Naive thymus-derived CD4-positive, alpha-beta T cell (primary cell): ENCODE measurements at regions of chr20 and their contacts with region 1.

Region 1: DNA sequence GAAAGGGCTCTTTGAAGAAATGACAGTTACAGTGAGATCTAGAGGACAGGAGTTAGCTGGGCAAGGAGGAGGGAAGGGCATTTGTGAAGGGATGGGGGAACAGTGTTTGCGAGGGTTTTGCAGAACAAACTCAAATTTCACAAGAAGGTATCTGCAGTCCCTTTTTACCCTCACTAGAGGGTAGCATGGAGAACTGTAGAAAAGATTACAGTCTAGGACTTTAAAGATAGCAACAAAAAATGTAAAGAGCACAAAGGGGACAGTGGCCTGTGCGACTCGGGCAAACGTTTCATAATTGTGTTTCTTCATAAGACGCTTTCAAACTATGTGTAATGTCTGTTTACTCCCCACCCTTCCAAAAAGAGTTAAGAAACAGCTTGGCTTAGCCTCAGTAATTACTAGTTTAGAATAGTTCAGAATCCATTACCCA is 21.2 kb upstream of the ASXL1 start:
- DNase-seq: peak in 7 of 9 donors; percentile 18 to 57 (median 35)
- ATAC-seq: peak; percentile 79
- H3K4me3 ChIP-seq: no peak overlapping the region
- H3K4me3 Mint-ChIP-seq: no peak overlapping the region
- H3K27ac ChIP-seq: no peak overlapping the region
- H3K27ac Mint-ChIP-seq: peak overlapping the region in 3 of 9 donors; percentile 5 to 75 (median 18)
- H3K4me1 ChIP-seq: peaks cover 5 to 13% of the 10 kb centered on the region in 2 donors
- H3K4me1 Mint-ChIP-seq: peaks cover 5 to 27% (median 8%) of the 10 kb centered on the region in 7 donors
- H3K27me3 ChIP-seq: no peaks in the 10 kb centered on the region
- H3K27me3 Mint-ChIP-seq: no peaks in the 10 kb centered on the region

Region 2: GRCh38 chr20:32168184-32168905 is 168.6 kb before region 1 on chr20:
- CTCF ChIA-PET with region 1: no interaction called
- POLR2A ChIA-PET with region 1: no interaction called
- intact Hi-C with region 1: no loop called
- DNase-seq: no peak
- ATAC-seq: no peak
- H3K4me3 ChIP-seq: no peak overlapping the region
- H3K4me3 Mint-ChIP-seq: no peak overlapping the region
- H3K27ac ChIP-seq: no peak overlapping the region
- H3K27ac Mint-ChIP-seq: peak overlapping the region in 1 of 9 donors; percentile 22
- H3K4me1 ChIP-seq: no peaks in the 10 kb centered on the region
- H3K4me1 Mint-ChIP-seq: peaks cover 0 to 5% (median 0%) of the 10 kb centered on the region in 7 donors
- H3K27me3 ChIP-seq: no peaks in the 10 kb centered on the region
- H3K27me3 Mint-ChIP-seq: no peaks in the 10 kb centered on the region

Region 3: DNA sequence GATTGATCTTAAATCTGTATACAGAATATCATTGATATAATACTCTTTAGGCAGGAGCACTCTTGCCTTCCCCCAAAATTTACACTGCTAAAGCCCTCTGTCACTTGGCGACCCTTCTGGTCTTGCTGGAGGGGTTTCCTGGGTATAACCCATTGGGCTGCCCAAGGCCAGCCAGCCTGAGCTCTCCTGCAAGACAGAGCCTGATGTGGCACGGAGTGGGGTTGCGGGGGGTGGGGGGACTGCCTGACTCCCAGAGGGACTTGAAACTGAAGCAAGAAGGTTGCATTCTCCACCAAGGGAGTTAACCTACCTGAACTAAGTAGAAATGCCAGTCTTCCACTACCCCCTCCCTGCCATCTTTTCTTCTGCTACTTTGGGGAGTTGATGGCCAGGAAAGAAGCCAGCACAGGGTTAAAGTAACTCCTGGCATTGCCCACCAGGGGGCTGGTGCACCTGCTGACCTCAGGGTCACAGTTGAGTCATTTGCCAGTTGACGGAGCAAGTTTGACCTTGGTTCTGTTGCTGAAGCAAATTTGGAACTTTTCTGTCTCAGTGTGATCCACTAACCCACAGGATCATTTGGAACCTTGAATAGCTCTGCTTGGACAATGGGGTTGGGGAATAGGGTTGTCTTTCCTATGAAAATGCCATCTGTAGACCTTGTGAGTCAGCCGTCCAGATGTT is 100.6 kb after region 1 on chr20:
- CTCF ChIA-PET with region 1: no interaction called
- POLR2A ChIA-PET with region 1: no interaction called
- intact Hi-C with region 1: loop called in 1 of 2 experiments (anchors 5 kb)
- DNase-seq: no peak
- ATAC-seq: peak; percentile 36
- H3K4me3 ChIP-seq: no peak overlapping the region
- H3K4me3 Mint-ChIP-seq: no peak overlapping the region
- H3K27ac ChIP-seq: no peak overlapping the region
- H3K27ac Mint-ChIP-seq: peak overlapping the region in 6 of 9 donors; percentile 7 to 48 (median 28)
- H3K4me1 ChIP-seq: no peaks in the 10 kb centered on the region
- H3K4me1 Mint-ChIP-seq: peaks cover 0 to 19% (median 9%) of the 10 kb centered on the region in 7 donors
- H3K27me3 ChIP-seq: no peaks in the 10 kb centered on the region
- H3K27me3 Mint-ChIP-seq: no peaks in the 10 kb centered on the region

Region 4: DNA sequence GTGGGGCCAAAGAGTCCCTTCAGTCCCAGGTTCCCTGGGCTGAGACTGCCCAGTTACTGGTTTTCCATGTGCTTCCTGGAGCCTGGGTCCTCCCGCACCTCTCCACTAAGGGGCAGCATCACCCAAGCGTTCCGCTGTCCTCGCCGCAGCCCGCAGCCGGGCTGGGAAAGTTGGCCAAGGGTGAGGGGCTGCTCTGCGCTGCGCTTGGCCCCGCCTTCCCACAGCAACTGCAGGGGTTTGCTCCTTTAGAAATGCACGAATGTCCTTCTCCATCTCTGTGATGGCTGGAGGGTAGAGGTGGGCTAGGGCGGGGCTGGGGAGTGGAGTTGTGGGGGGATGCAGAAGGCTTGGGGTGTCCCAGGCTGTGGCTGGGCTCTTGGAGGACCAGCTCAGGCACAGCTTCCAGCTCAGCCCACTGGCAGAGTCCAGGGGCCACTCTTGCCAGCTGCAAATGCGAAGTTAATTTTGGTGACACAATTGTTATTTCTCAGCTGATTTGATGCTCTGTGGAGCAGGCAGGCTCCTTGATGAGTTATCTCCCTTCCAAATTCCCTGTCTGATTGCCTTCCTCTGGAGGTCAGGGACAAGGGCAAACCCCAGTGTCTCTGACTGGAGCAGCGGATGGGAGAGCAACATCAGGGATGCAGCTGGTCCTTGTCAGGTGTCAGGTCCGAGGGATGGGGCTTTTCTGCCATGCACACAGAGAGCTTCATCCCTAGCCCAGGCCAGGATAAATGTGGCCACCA is 185.0 kb after region 1 on chr20:
- CTCF ChIA-PET with region 1: interaction called, 3 read pairs
- POLR2A ChIA-PET with region 1: no interaction called
- intact Hi-C with region 1: loop called in 1 of 2 experiments (anchors 1 kb)
- DNase-seq: peak; percentile 50 to 76 (median 63)
- ATAC-seq: peak; percentile 89
- H3K4me3 ChIP-seq: peak overlapping the region; percentile 27
- H3K4me3 Mint-ChIP-seq: peak overlapping the region in 9 of 10 donors; percentile 17 to 72 (median 53)
- H3K27ac ChIP-seq: peak overlapping the region; percentile 60
- H3K27ac Mint-ChIP-seq: peak overlapping the region; percentile 63 to 95 (median 90)
- H3K4me1 ChIP-seq: peaks cover 36 to 65% of the 10 kb centered on the region in 2 donors
- H3K4me1 Mint-ChIP-seq: peaks cover 39 to 77% (median 67%) of the 10 kb centered on the region in 7 donors
- H3K27me3 ChIP-seq: no peaks in the 10 kb centered on the region
- H3K27me3 Mint-ChIP-seq: no peaks in the 10 kb centered on the region